Pancreas (tissue), 10 donors: ENCODE measurements at regions of chr18 and their contacts with region 1.

Region 1: DNA sequence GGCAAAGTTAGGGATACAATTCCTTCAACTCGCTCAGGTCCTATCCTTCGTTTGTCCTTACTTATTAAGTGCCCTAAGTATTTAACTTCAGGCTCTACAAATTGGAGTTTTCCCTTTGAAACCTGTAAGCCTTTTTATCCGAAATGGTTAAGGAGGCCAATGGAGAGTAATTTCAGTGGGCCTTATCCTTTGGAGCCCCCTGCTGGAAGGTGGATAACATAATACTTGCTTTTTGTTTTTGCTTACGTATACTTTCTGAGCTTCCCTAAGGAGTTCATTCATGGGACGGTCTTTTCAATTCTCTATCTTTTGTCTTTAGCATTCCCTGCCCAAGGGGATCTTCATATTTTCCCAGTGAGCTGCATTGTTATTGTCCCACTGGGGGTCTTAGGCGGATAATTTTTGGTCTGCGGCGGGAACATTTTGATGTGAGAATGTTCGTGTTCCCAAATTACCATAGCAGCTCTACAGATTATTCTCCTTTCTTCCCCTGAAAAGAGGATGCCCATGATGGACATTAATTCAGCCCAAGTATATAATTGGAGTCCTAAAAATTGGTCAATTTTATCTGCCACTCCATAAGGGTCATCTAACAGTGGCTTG is 34.4 kb upstream of the TRAPPC8 start:
- DNase-seq: peak in 3 of 6 donors; percentile 18 to 37 (median 23)
- ATAC-seq: peak; percentile 58 to 84 (median 73)
- H3K4me3 ChIP-seq: no peak overlapping the region
- H3K27ac ChIP-seq: no peak overlapping the region
- H3K4me1 ChIP-seq: no peaks in the 10 kb centered on the region
- H3K27me3 ChIP-seq: no peaks in the 10 kb centered on the region
- CTCF ChIP-seq: peak in 2 of 4 donors; percentile 33 to 44

Region 2: GRCh38 chr18:31736630-31737029 is 240.7 kb before region 1 on chr18:
- intact Hi-C with region 1: loop called in 1 of 3 experiments (anchors 10 kb)
- DNase-seq: no peak
- ATAC-seq: peak in 2 of 4 donors; percentile 27 to 34
- H3K4me3 ChIP-seq: no peak overlapping the region
- H3K27ac ChIP-seq: no peak overlapping the region
- H3K4me1 ChIP-seq: no peaks in the 10 kb centered on the region
- H3K27me3 ChIP-seq: no peaks in the 10 kb centered on the region
- CTCF ChIP-seq: no peak

Region 3: DNA sequence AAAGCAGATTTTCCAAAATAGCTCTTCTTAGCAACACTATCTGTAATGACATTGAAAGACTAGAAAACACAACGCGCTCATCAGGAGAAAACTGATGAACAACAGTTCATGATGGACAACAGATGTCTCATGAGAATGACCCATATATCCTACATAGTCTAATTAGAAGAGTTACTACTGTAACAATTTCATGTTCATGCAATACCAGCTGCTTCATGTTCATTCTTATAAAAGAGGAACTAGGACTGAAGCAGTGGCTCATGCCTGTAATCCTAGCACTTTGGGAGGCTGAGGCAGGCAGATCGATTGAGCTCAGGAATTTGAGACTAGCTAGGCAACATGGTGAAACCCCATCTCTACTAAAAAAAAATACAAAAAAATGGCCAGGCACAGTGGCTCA is 57.1 kb before region 1 on chr18:
- intact Hi-C with region 1: no loop called
- DNase-seq: no peak
- ATAC-seq: no peak
- H3K4me3 ChIP-seq: no peak overlapping the region
- H3K27ac ChIP-seq: no peak overlapping the region
- H3K4me1 ChIP-seq: no peaks in the 10 kb centered on the region
- H3K27me3 ChIP-seq: no peaks in the 10 kb centered on the region
- CTCF ChIP-seq: no peak